Naive thymus-derived CD4-positive, alpha-beta T cell (primary cell): ENCODE measurements at regions of chr1 and their contacts with region 1.

Region 1: DNA sequence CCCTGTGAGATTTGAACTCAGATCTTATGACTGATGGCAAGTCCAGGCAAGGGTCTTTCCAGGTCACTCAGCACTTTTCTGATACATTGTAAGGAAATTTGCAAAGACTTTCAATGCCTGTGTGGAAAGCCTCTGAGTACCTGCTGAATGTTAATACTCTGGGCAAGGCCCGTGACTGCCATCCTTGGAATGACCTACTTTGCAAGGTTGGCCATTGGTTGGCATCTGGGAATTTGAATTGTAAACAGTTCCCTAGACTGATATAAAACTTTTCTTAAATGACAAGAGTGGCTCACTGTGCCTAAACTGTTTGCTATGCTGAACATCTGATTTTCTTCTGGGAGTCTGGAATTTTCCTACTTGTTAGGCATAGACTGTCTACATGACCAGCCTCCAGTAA is 57.1 kb downstream of the CD2 start:
- DNase-seq: no peak
- ATAC-seq: no peak
- H3K4me3 ChIP-seq: no peak overlapping the region
- H3K4me3 Mint-ChIP-seq: no peak overlapping the region
- H3K27ac ChIP-seq: no peak overlapping the region
- H3K27ac Mint-ChIP-seq: peak overlapping the region in 2 of 9 donors; percentile 44 to 72
- H3K4me1 ChIP-seq: peaks cover 15 to 70% of the 10 kb centered on the region in 2 donors
- H3K4me1 Mint-ChIP-seq: peaks cover 35 to 78% (median 51%) of the 10 kb centered on the region in 7 donors
- H3K27me3 ChIP-seq: no peaks in the 10 kb centered on the region
- H3K27me3 Mint-ChIP-seq: no peaks in the 10 kb centered on the region

Region 2: DNA sequence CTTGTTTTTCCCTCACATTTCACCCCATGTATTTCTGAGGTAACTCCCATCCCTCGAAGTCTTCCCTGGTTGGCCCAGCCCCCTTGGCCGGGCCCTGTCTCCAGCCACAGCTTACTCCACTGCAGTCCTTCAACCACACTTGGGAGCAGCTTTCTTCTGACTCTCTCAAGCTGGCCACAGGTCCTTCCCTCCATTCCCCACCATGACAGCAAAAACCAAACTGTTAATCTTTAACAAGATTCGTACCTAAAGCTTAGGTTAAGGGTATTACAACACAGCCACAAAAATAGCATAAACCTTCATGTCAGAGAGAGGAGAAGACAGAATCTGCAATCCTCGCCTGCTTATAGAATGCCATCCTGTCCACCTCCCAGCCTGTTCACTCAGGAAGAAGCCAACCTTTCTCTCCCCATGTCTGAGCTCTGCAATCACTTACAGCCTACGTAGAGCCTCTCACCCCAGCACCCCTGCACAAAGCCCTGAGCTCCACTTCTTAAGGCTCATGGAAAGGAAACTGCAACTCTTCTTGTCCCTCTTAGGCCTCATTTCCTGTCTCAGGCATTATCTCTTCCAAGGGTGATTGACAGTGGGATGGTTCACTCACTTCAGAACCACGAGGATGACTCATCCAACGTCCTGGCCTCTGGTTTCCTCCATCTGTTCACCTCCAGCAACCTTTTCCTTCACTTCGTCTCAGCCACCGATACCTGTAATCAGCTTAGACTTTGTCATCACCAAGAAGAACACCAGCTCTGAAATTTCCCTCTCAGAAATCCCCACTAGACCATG is 15.7 kb after region 1 on chr1:
- CTCF ChIA-PET with region 1: interaction called, 4 read pairs
- POLR2A ChIA-PET with region 1: interaction called, 6 read pairs
- intact Hi-C with region 1: loop called in 1 of 2 experiments (anchors 2 kb)
- DNase-seq: peak in 3 of 9 donors; percentile 11 to 64 (median 46)
- ATAC-seq: peak; percentile 59
- H3K4me3 ChIP-seq: no peak overlapping the region
- H3K4me3 Mint-ChIP-seq: peak overlapping the region in 6 of 10 donors; percentile 1 to 76 (median 22)
- H3K27ac ChIP-seq: no peak overlapping the region
- H3K27ac Mint-ChIP-seq: peak overlapping the region; percentile 10 to 94 (median 77)
- H3K4me1 ChIP-seq: peaks cover 10 to 12% of the 10 kb centered on the region in 2 donors
- H3K4me1 Mint-ChIP-seq: peaks cover 11 to 60% (median 25%) of the 10 kb centered on the region in 7 donors
- H3K27me3 ChIP-seq: no peaks in the 10 kb centered on the region
- H3K27me3 Mint-ChIP-seq: peaks cover 0 to 3% (median 0%) of the 10 kb centered on the region in 5 donors

Region 3: DNA sequence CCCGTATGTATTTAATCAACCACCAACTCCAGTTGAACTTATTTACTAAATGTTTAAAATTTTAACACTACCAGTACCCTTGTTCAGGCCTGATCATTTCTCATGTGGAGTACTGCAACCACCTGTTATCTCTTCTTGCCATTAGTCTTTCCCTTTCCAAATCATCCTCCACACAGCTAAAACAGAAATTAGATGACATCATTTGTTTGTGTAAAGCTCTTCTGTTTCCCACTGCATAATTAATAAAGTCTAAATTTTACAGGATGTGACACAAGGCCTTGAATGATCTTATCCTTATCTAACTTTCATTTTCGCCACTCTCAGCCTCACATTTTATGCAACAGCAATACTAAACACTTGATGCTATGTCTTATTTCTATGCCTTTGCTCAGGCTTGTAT is 1093.7 kb after region 1 on chr1:
- CTCF ChIA-PET with region 1: no interaction called
- POLR2A ChIA-PET with region 1: no interaction called
- intact Hi-C with region 1: no loop called
- DNase-seq: no peak
- ATAC-seq: no peak
- H3K4me3 ChIP-seq: no peak overlapping the region
- H3K4me3 Mint-ChIP-seq: no peak overlapping the region
- H3K27ac ChIP-seq: no peak overlapping the region
- H3K27ac Mint-ChIP-seq: no peak overlapping the region
- H3K4me1 ChIP-seq: no peaks in the 10 kb centered on the region
- H3K4me1 Mint-ChIP-seq: peaks cover 0 to 4% (median 0%) of the 10 kb centered on the region in 7 donors
- H3K27me3 ChIP-seq: no peaks in the 10 kb centered on the region
- H3K27me3 Mint-ChIP-seq: no peaks in the 10 kb centered on the region